ENCODE measurements at regions of chr12 and their contacts with region 1.

Region 1: DNA sequence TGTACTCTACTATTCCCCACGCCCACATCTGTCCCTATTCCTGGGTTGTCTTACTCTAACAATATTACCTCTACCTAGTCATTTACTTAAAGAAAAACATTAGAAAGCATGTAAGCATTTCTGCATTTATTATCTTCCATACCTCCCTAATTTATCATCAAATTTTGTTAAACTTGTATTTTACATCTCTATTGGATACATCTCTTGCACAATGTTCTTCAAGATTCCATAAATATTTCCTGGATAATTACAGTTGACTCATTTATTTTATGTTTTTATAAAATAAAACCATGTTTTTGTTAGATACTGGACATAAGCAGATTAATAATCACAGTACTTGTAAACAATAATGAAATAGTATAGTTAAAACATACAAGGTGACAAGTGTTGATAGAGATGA is 209.0 kb downstream of the TMTC3 start:
- DNase-seq: no peak
- ATAC-seq: no peak
- H3K4me3 ChIP-seq: no peak overlapping the region
- H3K27ac ChIP-seq: no peak overlapping the region
- H3K4me1 ChIP-seq: no peaks in the 10 kb centered on the region
- H3K27me3 ChIP-seq: no peaks in the 10 kb centered on the region
- CTCF ChIP-seq: no peak
- POLR2A ChIP-seq: no peak

Region 2: DNA sequence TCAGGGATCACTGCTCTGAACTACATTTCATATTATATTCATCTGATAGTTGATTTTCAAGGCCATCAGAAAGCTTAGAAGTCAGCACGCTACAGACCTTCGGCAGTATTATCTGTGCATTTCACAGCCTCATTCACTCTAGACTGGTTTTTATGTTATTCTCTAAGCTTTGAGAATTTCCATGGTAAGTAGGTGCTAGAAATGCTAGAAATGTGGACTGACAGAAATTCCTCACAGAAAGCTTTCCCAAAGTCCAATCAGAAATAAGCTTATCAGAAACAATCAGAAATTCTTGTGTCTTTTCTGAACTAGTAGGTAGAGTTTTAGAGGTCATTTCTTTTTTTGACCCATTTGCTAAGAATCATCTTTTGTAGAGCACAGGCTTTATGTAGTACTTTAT is 32.4 kb before region 1 on chr12:
- intact Hi-C with region 1: no loop called
- DNase-seq: no peak
- ATAC-seq: no peak
- H3K4me3 ChIP-seq: no peak overlapping the region
- H3K27ac ChIP-seq: no peak overlapping the region
- H3K4me1 ChIP-seq: no peaks in the 10 kb centered on the region
- H3K27me3 ChIP-seq: no peaks in the 10 kb centered on the region
- CTCF ChIP-seq: no peak
- POLR2A ChIP-seq: no peak

Region 3: DNA sequence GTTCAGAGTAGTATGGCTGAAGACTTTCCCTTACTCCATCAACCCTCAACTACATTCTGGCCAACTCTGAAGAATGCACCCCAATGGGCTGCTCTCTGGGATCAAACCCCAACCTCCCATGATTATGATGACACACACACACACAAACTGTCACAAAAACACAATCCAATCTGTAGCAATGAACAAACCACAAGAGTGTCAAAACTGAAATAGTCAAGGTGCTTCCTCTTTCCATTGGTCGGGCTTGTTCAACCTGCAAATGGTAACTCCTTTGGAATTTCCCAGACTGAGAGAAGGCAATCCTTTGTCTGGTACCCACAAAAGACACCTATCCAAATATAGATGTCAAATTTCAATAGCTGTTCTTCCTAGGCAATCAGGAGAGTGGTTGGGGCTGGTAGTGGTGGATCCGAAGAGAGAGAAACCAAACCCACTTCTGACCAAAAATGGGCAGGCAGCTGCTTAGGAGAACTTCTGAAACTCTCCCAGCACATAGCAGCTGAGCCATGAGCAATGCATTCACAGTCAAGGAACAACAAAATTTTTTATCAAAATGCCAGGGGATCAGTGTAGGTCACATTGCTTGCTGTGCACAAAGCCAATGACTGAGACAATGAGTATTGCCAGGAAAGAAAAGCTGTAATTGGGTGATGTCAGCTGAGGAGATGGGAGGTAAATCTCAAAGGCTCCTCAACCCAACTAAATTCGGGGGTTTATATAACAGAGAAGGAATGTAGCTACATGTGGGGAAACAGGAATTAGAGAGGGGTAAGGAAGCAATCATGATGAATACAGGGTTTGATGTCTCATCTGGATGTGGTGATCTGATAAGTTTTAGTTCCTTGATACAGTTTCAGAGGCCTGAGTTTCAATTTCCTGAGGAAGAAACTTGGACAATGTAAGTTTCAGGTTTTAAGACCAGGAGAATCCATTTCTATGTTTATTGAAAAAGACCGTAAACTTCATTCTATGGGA is 37.7 kb after region 1 on chr12:
- intact Hi-C with region 1: loop called in 1 of 10 experiments (anchors 2 kb)
- DNase-seq: no peak
- ATAC-seq: no peak
- H3K4me3 ChIP-seq: no peak overlapping the region
- H3K27ac ChIP-seq: no peak overlapping the region
- H3K4me1 ChIP-seq: no peaks in the 10 kb centered on the region
- H3K27me3 ChIP-seq: no peaks in the 10 kb centered on the region
- CTCF ChIP-seq: no peak
- POLR2A ChIP-seq: no peak

Measured in heart left ventricle (tissue), 16 donors.